PC-3 (cell line): ENCODE measurements at regions of chr16 and their contacts with region 1.

Region 1: DNA sequence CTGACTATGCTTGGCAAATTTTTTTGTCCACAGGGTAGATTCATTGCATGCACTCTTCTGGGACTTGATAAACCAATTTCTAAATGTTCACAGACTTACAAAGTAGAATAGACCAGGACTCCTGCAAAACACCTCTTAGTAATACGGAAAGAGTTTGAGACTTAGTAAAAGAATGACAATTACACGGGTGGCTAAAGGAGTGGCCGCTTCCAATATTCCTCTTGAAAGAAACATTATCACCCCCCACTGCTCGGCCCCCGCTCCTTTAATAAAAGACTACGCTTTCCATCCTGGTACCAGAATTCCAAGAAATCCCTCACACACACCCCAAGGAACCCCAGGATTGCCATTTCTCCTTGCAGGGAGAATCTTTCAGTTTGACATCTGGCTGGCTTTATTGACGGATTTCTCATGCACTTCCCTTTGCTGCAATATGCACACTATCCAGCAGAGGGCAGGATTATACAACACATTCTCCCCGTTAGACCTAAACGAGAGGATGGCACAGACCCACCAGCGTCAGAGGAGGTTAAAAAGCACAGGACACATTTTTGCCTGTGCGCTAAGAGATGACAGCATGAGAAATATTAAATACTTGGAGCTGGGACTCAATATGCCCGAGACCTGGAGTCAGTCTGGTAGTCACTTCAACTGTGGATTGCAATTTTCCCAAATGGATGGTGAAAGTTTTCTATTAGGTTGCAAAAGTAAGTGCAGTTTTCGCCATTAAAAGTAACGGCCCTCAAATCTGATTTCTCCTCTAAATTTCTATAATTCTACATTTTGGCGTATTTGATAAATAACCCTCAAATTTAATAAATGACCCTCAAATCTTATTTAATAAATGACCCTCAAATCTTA is 46.6 kb upstream of the NUDT7 start:
- DNase-seq: peak; percentile 74
- ATAC-seq: peak; percentile 59
- H3K4me3 ChIP-seq: no peak overlapping the region
- H3K27ac ChIP-seq: no peak overlapping the region
- H3K4me1 ChIP-seq: no peaks in the 10 kb centered on the region
- H3K27me3 ChIP-seq: 0 out of 2 replicates have a peak, but pooled peaks cover 10% of the 10 kb centered on the region
- CTCF ChIP-seq: peak; percentile 80

Region 2: DNA sequence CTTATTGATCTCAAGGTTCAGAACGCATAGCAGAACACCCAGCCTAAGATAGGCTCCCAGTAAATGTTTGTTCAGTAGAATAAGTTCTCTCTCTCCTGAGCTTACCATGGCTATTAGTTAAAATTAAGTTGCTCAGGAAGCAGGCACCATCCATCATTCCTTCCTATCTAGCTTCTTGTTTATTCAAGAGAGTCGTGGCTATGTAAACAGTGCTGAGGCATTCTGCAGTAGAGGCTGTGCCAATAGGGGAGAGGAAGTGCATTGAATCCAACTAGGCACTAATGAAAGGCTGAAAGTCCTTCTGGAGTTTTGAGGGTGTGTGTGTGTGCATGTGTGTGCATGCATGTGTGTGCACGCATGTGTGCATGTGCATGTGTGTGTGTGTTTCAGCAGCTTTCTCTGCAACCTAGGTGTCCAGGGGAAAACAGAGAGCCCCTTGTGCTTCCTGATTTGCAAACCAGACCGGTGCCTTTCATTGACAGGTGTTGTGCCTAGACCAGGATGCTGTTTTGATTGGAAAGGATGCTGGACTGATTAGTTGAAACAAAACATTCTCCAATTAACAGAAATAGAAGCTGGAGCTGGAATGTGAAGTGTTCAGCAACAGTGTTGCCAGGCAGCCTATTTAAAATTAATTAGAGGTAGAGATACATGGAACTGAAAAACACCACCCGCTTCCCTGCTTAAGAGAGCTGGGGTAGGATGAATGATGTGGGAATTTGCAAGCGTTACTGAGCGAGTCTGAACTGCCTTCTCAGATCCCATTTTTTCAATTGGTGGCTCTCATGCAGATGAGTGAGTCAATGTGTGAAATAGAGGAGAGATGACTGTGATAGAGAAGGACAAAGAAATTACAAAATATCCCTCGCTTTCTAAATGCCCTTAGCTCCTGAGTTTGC is 243.4 kb after region 1 on chr16:
- CTCF ChIA-PET with region 1: no interaction called
- POLR2A ChIA-PET with region 1: no interaction called
- intact Hi-C with region 1: no loop called
- DNase-seq: no peak
- ATAC-seq: no peak
- H3K4me3 ChIP-seq: no peak overlapping the region
- H3K27ac ChIP-seq: no peak overlapping the region
- H3K4me1 ChIP-seq: no peaks in the 10 kb centered on the region
- H3K27me3 ChIP-seq: no peaks in the 10 kb centered on the region
- CTCF ChIP-seq: no peak

Region 3: DNA sequence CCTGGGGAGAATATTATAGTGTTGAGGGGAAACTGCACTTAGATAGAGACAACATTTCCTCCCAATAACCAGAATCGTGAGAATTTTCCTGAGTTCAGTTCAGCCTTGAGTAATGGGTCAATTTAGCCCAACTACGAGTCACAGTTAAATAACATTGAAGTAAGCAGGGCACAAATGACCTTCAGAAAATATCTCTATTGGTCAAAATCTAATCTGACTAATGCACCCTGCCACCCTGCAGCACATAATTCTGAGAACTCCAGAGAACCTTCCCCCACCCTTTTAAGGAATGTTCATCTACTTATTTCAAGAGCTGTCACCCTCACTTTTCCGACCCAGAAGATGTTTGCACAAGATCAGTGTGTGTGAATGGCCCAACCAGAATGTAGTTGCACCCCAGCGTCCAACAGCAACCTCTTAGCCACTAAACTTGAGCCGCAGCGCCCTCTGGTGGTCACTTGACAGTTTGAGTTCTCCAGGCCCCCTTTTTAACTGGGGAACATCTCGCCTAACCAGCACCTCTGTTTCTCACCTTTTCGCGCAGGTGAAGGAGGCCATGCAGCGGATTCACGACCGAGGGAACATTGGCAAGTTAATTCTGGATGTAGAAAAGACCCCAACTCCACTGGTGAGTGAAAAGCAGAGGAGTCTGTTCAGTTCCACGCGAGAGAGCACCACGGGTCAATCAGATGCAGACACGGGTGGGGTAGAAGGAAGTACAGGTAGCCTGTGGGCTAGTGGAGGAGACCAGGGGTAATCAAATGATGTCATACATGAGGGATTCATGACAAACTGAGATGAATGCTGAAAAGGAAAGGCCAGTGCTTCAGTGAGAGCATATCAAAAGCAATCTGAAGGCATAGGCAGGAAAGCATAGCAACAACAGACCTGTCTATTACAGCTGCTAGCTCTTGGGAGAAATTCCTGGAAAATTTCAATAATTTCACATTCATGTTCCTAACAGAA is 295.9 kb after region 1 on chr16:
- CTCF ChIA-PET with region 1: no interaction called
- POLR2A ChIA-PET with region 1: no interaction called
- intact Hi-C with region 1: loop called (anchors 1 kb)
- DNase-seq: peak; percentile 64
- ATAC-seq: peak; percentile 37; the same call in 1 of the 2 replicates
- H3K4me3 ChIP-seq: no peak overlapping the region
- H3K27ac ChIP-seq: no peak overlapping the region
- H3K4me1 ChIP-seq: no peaks in the 10 kb centered on the region
- H3K27me3 ChIP-seq: no peaks in the 10 kb centered on the region
- CTCF ChIP-seq: peak; percentile 77

Region 4: DNA sequence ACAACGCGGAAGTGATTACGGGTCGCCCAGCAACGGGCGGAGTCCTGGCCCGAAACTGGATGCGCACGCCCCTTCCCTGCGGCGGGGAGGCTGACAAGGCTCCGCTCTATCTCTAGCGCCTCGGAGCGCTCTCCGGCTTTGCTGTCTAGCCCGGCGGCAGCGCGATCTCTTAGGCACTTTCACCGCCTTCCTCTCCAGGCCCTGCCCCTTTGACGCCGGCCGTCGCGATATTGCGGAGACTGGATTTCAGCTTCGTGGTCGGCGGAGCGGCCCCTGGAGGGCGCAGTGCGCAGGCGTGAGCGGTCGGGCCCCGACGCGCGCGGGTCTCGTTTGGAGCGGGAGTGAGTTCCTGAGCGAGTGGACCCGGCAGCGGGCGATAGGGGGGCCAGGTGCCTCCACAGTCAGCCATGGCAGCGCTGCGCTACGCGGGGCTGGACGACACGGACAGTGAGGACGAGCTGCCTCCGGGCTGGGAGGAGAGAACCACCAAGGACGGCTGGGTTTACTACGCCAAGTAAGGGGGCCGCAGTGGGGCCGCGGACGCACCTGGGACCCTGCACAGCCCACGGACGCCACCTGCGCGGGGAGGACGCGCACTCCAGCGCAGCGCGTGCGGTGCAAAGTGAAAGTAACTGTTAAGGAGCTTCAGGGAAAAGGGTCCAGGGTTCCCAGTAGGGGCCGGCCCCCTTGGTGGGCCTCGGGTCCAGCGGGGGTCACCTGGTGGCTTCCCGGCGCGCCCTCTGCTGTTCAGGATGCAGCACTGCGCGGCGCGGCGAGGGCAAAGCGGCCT is 423.9 kb after region 1 on chr16 and contains the start of gene WWOX:
- CTCF ChIA-PET with region 1: no interaction called
- POLR2A ChIA-PET with region 1: no interaction called
- intact Hi-C with region 1: loop called (anchors 2 kb)
- DNase-seq: peak; percentile 94
- ATAC-seq: peak; percentile 91
- H3K4me3 ChIP-seq: peak within 1 kb of the TSS; percentile 95
- H3K27ac ChIP-seq: peak within 1 kb of the TSS; percentile 46
- H3K4me1 ChIP-seq: peaks cover 17% of the 10 kb centered on the region
- H3K27me3 ChIP-seq: peaks cover 4% of the 10 kb centered on the region; the same call in 1 of the 2 replicates
- CTCF ChIP-seq: peak; percentile 88
- total RNA-seq, gene WWOX: 28.3 and 60.7 TPM in 2 replicates

Region 5: DNA sequence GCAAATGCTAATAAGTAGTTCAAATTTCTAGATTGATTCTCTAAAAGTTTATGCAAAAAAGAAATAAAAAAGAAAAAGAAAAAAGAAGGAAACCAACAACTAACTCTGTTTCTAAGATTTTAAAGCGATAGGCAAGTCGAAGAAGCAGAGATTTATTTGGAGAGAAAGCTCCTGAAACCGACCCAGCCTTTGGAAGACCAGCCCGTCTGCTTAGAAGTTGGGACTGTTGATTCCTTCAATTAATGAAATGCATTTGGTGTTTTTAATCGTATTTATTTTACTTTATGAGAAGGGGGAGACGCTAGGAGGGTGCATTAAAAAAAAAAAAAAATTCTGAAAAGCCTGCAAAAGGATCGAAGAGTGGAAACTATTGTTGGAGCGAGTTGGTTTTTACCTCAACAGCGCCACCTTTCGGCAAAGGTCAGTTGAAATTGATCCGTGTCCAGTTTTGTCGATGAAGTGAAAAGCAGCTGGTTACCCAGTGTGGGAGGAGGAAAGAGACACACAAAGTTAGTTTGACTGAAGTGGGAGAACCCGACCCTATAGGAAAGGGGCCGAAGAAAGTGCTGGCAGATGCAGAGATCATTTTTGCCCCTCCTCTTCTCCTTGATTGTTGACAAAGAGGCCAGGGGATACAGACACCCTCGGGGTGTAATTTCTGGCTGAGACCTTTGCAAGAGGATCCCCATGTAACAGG is 1926.4 kb after region 1 on chr16:
- CTCF ChIA-PET with region 1: no interaction called
- POLR2A ChIA-PET with region 1: no interaction called
- intact Hi-C with region 1: loop called (anchors 5 kb)
- DNase-seq: peak; percentile 55
- ATAC-seq: no peak
- H3K4me3 ChIP-seq: no peak overlapping the region
- H3K27ac ChIP-seq: no peak overlapping the region
- H3K4me1 ChIP-seq: no peaks in the 10 kb centered on the region
- H3K27me3 ChIP-seq: peaks cover 69% of the 10 kb centered on the region
- CTCF ChIP-seq: peak; percentile 73